ENCODE measurements at regions of chr22 and their contacts with region 1.

Region 1: DNA sequence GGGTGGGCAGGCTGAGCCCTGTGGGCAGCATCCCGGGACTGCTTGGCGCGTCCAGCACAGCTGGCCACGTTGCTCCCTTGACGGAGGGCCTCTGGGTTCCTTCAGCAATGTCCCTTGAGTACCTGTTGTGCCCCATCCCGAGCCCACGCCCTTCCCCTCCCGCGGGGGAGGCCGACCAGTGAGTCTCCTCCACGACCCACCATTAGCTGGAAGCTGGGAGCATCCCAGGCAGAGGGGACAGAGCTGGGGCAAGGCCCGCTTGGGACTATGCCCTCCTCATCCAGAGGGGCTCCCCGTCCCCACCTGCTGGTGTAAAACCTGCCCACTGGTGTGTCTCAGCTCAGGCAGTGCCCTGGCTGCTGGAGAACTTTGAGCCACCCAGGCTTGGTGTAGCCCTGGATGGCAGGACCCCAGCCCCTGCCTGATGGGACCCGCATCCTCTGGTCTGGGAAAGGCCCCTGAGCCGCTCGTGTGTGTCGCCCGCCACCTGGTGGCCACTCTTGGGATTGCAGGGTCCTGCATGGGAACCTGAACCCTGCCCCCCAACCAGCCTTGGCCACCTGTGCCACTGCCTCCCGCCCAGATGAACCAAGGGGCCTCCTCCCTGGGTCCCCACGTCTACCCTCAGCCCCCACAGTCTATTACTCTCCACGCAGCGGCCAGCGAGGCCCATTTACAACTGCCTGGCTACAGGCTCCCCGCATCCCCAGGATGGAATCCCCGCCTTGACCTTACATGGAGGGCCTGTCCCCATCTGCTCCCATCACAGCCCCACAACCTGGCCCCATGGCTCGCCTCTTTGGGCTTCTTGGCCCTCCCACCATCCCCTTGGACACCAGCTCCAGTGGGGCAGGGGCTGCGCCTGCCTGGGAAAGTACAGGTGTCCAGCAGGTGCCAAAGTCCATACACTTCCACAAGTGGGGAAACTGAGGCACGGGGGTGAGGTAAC is 16.6 kb upstream of the ARHGAP8 start:
- DNase-seq: peak; percentile 44
- ATAC-seq: peak; percentile 60
- H3K4me3 ChIP-seq: no peak overlapping the region
- H3K27ac ChIP-seq: no peak overlapping the region
- H3K4me1 ChIP-seq: peaks cover 37% of the 10 kb centered on the region
- H3K27me3 ChIP-seq: no peaks in the 10 kb centered on the region; a peak in 1 of 5 replicates
- CTCF ChIP-seq: peak; percentile 96
- EP300 ChIP-seq: no peak
- POLR2A ChIP-seq: peak in 1 of 2 experiments; percentile 11; a peak in 2 of 4 replicates
- RAD21 ChIP-seq: peak; percentile 93

Region 2: GRCh38 chr22:44684506-44685383 is 51.1 kb before region 1 on chr22:
- CTCF ChIA-PET with region 1: interaction called, 10 read pairs
- POLR2A ChIA-PET with region 1: no interaction called
- in situ Hi-C with region 1: no loop called
- intact Hi-C with region 1: no loop called
- DNase-seq: peak; percentile 92
- ATAC-seq: peak; percentile 91
- H3K4me3 ChIP-seq: no peak overlapping the region; a peak in 1 of 6 replicates
- H3K27ac ChIP-seq: peak overlapping the region; percentile 49
- H3K4me1 ChIP-seq: peaks cover 67% of the 10 kb centered on the region
- H3K27me3 ChIP-seq: no peaks in the 10 kb centered on the region; a peak in 1 of 5 replicates
- CTCF ChIP-seq: peak; percentile 97
- EP300 ChIP-seq: no peak
- POLR2A ChIP-seq: no peak
- RAD21 ChIP-seq: peak; percentile 93

Region 3: GRCh38 chr22:44697423-44698141 is 38.2 kb before region 1 on chr22:
- CTCF ChIA-PET with region 1: interaction called, 38 read pairs
- POLR2A ChIA-PET with region 1: no interaction called
- in situ Hi-C with region 1: loop called (anchors 5 kb)
- intact Hi-C with region 1: loop called (anchors 1 kb)
- DNase-seq: peak; percentile 45
- ATAC-seq: peak; percentile 50
- H3K4me3 ChIP-seq: no peak overlapping the region
- H3K27ac ChIP-seq: no peak overlapping the region
- H3K4me1 ChIP-seq: peaks cover 23% of the 10 kb centered on the region
- H3K27me3 ChIP-seq: no peaks in the 10 kb centered on the region
- CTCF ChIP-seq: peak; percentile 96
- EP300 ChIP-seq: no peak
- POLR2A ChIP-seq: no peak
- RAD21 ChIP-seq: peak; percentile 89